Activated CD4-positive, alpha-beta T cell treated with anti-CD3 and anti-CD28 coated beads, Interleukin-2, amount 10 ng/mL, durations not matched to agents 7 days and 5 days (primary cell): ENCODE measurements at regions of chr1 and their contacts with region 1.

Region 1: GRCh38 chr1:24486331-24487065 is 16.1 kb upstream of the RCAN3 start:
- DNase-seq: peak; percentile 80
- H3K4me3 Mint-ChIP-seq: peak overlapping the region; percentile 63
- H3K27ac Mint-ChIP-seq: peak overlapping the region; percentile 93
- H3K4me1 Mint-ChIP-seq: peaks cover 78% of the 10 kb centered on the region
- H3K27me3 Mint-ChIP-seq: no peaks in the 10 kb centered on the region

Region 2: DNA sequence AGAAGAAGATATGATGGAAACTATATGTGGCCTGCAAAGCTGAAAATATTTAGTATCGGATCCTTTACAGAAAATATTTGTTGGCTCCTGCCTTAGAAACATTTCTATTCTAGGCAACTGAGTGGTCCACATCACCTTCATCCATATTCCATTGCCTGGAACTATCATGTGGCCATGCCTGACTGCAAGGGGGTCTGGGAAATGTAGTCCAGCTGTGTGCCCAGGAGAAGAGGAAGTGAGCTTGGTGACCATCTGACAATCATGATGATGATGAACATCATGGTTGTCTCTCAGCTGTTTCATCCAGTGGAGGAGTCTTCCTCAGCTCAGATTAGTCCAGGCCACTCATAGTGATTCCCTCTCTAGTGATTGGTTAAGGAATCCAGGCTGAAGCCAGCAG is 237.6 kb before region 1 on chr1:
- CTCF ChIA-PET with region 1: no interaction called
- POLR2A ChIA-PET with region 1: no interaction called
- DNase-seq: no peak
- H3K4me3 Mint-ChIP-seq: no peak overlapping the region
- H3K27ac Mint-ChIP-seq: no peak overlapping the region
- H3K4me1 Mint-ChIP-seq: no peaks in the 10 kb centered on the region
- H3K27me3 Mint-ChIP-seq: peaks cover 6% of the 10 kb centered on the region

Region 3: GRCh38 chr1:24341260-24341659 is 145.2 kb before region 1 on chr1:
- CTCF ChIA-PET with region 1: no interaction called
- POLR2A ChIA-PET with region 1: no interaction called
- DNase-seq: no peak
- H3K4me3 Mint-ChIP-seq: no peak overlapping the region
- H3K27ac Mint-ChIP-seq: no peak overlapping the region
- H3K4me1 Mint-ChIP-seq: no peaks in the 10 kb centered on the region
- H3K27me3 Mint-ChIP-seq: peaks cover 3% of the 10 kb centered on the region

Region 4: GRCh38 chr1:24502709-24503058 is 16.2 kb after region 1 on chr1 and contains the start of gene RCAN3:
- CTCF ChIA-PET with region 1: interaction called, 11 read pairs
- POLR2A ChIA-PET with region 1: interaction called, 15 read pairs
- DNase-seq: peak; percentile 90
- H3K4me3 Mint-ChIP-seq: peak within 1 kb of the TSS; percentile 91
- H3K27ac Mint-ChIP-seq: peak within 1 kb of the TSS; percentile 99
- H3K4me1 Mint-ChIP-seq: peaks cover 64% of the 10 kb centered on the region
- H3K27me3 Mint-ChIP-seq: no peaks in the 10 kb centered on the region
- total RNA-seq, gene RCAN3: 96.8 to 100 TPM

Region 5: GRCh38 chr1:24558902-24559791 is 72.6 kb after region 1 on chr1:
- CTCF ChIA-PET with region 1: no interaction called
- POLR2A ChIA-PET with region 1: no interaction called
- DNase-seq: no peak
- H3K4me3 Mint-ChIP-seq: no peak overlapping the region
- H3K27ac Mint-ChIP-seq: no peak overlapping the region
- H3K4me1 Mint-ChIP-seq: peaks cover 18% of the 10 kb centered on the region
- H3K27me3 Mint-ChIP-seq: peaks cover 32% of the 10 kb centered on the region